MCF 10A (cell line): ENCODE measurements at regions of chr14 and their contacts with region 1.

Region 1: DNA sequence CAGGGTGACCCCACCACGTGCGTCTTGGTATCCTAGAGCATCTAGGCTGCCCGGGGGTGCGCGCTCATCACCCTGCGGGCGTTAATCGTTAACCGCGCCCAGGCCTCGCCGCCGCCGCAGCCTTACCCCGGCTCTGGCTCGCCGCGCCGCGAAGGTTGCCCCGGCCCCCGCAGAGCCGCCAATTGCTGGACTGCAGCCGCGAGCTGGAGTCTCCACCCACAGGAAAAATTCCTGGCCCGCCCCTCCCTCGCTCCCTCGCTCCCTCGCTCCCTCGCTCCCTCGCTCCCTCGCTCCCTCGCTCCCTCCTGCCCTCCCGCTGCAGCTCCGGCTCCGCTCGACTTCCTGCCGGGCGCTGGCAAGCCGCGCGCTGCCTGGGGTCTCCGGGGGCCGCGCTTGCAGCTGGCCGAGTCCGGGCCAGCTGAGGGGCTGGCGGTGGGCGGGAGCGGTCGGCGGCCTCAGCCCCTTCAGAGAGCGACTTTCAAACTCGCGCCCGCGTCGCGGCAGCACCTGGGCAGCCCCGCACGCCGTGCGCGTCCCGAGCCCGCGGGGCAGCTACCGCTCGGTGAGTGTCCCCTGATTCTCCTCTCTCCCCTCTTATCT is at the start of gene PLEKHG3:
- DNase-seq: peak; percentile 80
- H3K4me3 Mint-ChIP-seq: peak within 1 kb of the TSS; percentile 81
- H3K27ac Mint-ChIP-seq: peak within 1 kb of the TSS; percentile 49
- H3K4me1 Mint-ChIP-seq: peaks cover 53% of the 10 kb centered on the region
- H3K27me3 Mint-ChIP-seq: no peaks in the 10 kb centered on the region
- CTCF ChIP-seq: no peak
- total RNA-seq, gene PLEKHG3: 52.9 and 72.8 TPM in 2 replicates

Region 2: DNA sequence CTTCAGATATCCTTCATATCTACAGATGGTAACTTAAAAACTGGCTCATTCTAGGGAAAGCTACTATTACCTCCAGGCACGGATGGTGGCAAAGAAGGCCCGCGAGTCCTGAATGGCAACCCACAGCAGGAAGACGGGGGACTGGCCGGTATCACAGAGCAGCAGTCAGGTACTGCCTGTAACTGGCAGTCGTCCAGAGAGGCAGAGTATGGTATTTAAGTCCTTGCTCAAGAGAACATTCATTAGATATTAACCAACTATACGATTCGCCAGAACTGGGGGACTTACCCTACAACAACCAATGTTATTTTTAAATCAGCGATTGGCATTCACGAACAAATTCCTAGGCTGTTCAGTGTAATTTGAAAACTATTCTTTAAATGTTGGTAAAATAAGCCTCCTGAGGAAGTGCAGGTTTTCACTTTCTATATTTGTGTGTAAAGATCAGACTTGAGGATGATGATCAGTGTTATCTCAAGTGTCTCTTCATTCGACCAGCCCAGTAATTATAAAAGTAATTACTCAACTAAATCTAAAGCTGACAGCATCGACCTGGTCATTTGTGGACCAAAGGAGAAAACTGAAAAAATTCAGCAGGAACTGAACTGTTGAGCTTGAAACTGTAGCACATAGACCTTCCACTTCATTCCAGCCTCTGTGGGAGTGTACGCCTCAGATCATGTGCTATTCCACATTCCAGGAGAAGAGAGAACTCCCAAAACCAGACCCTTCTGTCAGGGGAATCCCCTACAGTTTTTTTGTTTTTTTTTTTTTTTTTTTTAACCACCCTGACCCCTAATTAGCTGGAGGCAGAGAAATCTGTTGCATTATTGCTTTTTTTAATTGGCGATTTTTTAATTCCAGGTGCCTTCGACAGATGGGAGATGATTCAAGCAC is 485.7 kb before region 1 on chr14:
- CTCF ChIA-PET with region 1: no interaction called
- POLR2A ChIA-PET with region 1: no interaction called
- intact Hi-C with region 1: no loop called
- DNase-seq: no peak
- H3K4me3 Mint-ChIP-seq: no peak overlapping the region
- H3K27ac Mint-ChIP-seq: no peak overlapping the region
- H3K4me1 Mint-ChIP-seq: no peaks in the 10 kb centered on the region
- H3K27me3 Mint-ChIP-seq: no peaks in the 10 kb centered on the region
- CTCF ChIP-seq: no peak

Region 3: DNA sequence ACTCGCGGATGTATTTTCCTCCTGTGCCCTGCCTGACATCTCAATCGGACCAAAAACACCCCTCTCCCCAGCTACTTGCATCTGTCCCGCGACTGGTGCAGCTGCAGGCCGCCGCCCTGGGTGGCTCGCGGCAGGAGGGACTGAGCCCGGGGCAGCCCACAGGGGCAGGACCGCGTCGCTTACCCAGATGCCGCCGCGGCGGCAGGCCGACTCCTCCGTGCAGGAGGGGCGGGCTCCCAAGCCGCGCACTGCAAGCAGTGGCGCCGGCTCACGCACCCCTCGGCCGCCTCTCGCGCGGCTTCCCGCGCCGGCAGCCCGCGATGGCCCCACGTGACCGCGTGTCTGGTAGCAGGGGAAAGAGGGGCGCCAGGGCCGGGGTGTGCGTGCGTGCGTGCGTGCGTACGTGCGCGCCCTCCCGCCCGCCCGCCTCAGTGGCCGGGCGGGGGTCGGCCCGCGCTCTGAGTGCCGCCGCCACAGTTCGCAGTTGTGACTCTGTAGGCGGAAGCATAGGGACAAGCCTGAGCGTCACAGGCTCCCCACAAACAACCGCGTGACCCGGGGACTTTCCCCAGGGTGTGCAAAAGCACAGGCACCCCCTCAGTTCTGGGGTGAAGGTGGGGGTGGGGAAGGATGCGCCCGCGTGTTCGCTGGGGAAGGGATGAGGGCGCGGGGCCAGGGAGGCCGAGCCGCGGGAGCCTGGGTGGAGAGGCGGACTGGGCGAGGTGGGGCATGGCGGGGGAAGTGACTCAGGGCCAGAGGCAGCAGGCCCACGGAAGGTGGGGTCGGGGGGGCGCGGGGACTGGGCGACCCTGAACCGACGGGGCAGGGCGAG is 200.5 kb before region 1 on chr14 and contains the start of gene ZBTB25:
- CTCF ChIA-PET with region 1: no interaction called
- POLR2A ChIA-PET with region 1: interaction called, 20 read pairs
- intact Hi-C with region 1: no loop called
- DNase-seq: peak; percentile 90
- H3K4me3 Mint-ChIP-seq: peak within 1 kb of the TSS; percentile 83
- H3K27ac Mint-ChIP-seq: peak within 1 kb of the TSS; percentile 98
- H3K4me1 Mint-ChIP-seq: peaks cover 51% of the 10 kb centered on the region
- H3K27me3 Mint-ChIP-seq: no peaks in the 10 kb centered on the region
- CTCF ChIP-seq: no peak
- total RNA-seq, gene ZBTB25: 11.7 and 15.3 TPM in 2 replicates

Region 4: GRCh38 chr14:64688811-64689281 is 15.4 kb before region 1 on chr14:
- CTCF ChIA-PET with region 1: interaction called, 4 read pairs
- POLR2A ChIA-PET with region 1: interaction called, 56 read pairs
- intact Hi-C with region 1: no loop called
- DNase-seq: no peak
- H3K4me3 Mint-ChIP-seq: no peak overlapping the region
- H3K27ac Mint-ChIP-seq: no peak overlapping the region
- H3K4me1 Mint-ChIP-seq: peaks cover 20% of the 10 kb centered on the region
- H3K27me3 Mint-ChIP-seq: no peaks in the 10 kb centered on the region
- CTCF ChIP-seq: no peak

Region 5: GRCh38 chr14:64726585-64726890 is 22.3 kb after region 1 on chr14:
- CTCF ChIA-PET with region 1: interaction called, 6 read pairs
- POLR2A ChIA-PET with region 1: interaction called, 283 read pairs
- intact Hi-C with region 1: loop called (anchors 2 kb)
- DNase-seq: peak; percentile 87
- H3K4me3 Mint-ChIP-seq: peak overlapping the region; percentile 23
- H3K27ac Mint-ChIP-seq: peak overlapping the region; percentile 90
- H3K4me1 Mint-ChIP-seq: peaks cover 34% of the 10 kb centered on the region
- H3K27me3 Mint-ChIP-seq: no peaks in the 10 kb centered on the region
- CTCF ChIP-seq: no peak

Region 6: GRCh38 chr14:64764641-64765520 is 60.6 kb after region 1 on chr14:
- CTCF ChIA-PET with region 1: interaction called, 19 read pairs
- POLR2A ChIA-PET with region 1: interaction called, 48 read pairs
- intact Hi-C with region 1: loop called (anchors 2 kb)
- DNase-seq: peak; percentile 75
- H3K4me3 Mint-ChIP-seq: no peak overlapping the region
- H3K27ac Mint-ChIP-seq: no peak overlapping the region
- H3K4me1 Mint-ChIP-seq: peaks cover 50% of the 10 kb centered on the region
- H3K27me3 Mint-ChIP-seq: no peaks in the 10 kb centered on the region
- CTCF ChIP-seq: peak; percentile 92